HAP-1 (cell line): ENCODE measurements at regions of chr7 and their contacts with region 1.

Region 1: DNA sequence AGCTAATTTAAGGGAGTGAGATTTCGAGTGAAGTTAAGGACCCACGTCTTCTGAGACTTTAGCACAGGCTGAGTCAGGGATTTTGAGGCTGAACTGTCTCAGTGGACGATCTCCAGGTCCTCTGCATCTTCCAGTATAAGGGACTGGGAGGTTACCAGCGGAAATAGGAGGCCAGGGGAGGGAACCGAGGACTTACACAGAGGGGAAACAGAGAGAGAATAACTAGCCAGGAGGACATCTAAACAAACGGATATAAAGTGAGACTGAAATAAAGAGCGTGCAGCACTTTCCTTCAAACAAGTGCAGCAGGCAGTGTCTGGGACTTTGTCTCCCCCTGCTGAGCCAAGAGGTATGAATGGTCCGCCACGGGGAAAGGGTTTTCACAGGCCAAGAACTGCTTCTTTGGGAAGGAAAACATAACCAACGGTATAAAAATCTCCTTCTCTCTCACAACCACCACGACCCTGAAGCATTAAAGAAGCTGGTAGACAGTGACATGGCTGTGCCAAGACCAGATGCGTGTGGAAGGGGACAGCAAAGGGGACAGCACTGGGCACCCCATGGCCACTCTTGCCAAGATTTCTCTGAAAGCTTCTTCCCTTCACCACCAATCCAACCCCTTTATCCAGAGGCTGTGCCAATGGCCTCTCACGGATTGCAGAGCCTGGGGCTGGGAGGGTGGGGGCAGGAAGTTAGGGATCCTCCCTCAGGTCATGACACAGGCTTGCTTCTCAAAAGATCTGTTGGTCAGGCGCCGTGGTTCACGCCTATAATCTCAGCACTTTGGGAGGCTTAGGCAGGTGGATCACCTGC is 72.0 kb downstream of the SLC37A3 start:
- DNase-seq: peak; percentile 42 to 71
- H3K4me3 ChIP-seq: no peak overlapping the region
- H3K4me1 ChIP-seq: no peaks in the 10 kb centered on the region
- H3K27me3 ChIP-seq: no peaks in the 10 kb centered on the region

Region 2: DNA sequence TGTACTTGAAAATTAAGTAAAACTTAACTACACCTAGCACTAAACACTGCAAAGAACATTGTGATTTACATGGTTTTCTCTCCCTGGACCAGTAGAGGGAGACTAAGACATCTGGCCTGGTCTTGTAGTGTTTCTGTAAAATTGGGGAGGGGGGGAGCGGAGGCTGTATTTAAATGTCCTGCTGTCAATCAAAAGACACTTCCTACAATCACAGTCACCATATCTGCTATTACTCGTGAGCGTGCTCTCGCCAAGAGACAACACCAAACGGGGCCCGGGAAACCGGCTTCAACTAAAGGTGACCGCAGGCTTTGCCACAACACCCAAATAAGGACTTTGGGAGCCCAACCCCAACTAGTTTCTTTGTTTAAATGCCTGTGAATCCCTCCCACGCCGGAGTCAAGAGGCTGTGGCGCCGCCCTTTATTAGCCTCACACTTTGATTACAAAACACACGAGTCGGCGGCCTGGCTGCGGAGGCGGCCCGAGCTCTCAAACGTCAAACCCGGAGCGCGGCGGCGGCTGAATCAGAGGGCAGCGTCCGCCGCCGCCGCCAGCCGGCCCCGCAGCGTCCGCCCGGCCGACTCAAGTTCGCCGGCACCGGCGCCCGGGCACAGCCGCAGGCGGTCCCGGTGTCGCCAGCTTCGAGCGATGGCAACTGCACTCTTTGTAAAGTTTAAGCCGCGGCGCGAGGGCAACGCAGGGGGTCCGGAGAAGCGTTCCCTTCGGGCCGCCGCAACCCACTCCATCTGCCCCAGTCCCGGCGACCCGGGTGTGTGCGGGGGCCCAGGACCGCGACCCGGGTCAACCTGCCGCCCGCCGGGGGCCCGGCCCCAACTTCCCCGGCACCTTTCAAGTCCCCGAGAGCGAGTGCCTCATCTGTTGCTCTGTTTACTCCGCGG is 150.9 kb before region 1 on chr7:
- in situ Hi-C with region 1: loop called (anchors 10 kb)
- DNase-seq: peak; percentile 88 to 97
- H3K4me3 ChIP-seq: peak overlapping the region; percentile 63
- H3K4me1 ChIP-seq: peaks cover 4% of the 10 kb centered on the region; the same call in 1 of the 2 replicates
- H3K27me3 ChIP-seq: no peaks in the 10 kb centered on the region

Region 3: GRCh38 chr7:141014524-141015395 is 688.4 kb after region 1 on chr7 and contains the start of gene MRPS33:
- in situ Hi-C with region 1: no loop called
- DNase-seq: peak; percentile 93 to 97
- H3K4me3 ChIP-seq: peak within 1 kb of the TSS; percentile 68
- H3K4me1 ChIP-seq: peaks cover 18% of the 10 kb centered on the region
- H3K27me3 ChIP-seq: peaks cover 6% of the 10 kb centered on the region